H1 (cell line): ENCODE measurements at regions of chr7 and their contacts with region 1.

Region 1: DNA sequence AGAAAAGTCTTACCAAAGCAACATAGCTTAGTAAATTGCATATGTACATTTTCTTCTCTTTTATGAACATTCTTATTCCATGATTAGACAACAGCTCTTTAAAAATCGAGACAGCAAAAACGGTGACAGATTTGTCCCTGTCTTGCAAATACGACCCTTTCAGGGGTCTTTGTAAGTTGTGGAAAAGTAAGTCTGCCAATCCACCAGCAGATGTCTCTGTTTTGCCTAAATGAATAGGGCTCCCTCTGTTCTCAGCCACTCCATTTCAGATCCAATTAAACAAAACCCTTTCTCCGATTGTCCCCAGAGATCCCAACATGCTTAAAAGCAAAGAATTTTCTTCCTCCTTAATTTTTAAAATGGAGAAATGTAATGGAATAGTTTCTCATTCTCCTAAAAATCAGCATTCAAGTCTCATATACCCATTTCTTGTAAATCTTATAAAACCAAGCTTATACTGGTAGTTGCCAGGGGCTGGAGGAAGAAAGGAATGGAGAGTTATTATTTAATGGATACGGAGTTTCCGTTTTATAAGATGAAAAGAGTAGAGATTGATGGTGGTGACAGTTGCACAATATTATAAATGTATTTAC is 61.0 kb upstream of the NFE2L3 start:
- DNase-seq: no peak
- H3K4me3 ChIP-seq: peak overlapping the region in 1 of 4 experiments; percentile 19; a peak in 1 of 8 replicates
- H3K27ac ChIP-seq: no peak overlapping the region
- H3K4me1 ChIP-seq: peaks cover 0 to 3% (median 3%) of the 10 kb centered on the region in 4 experiments; a peak in 3 of 7 replicates
- H3K27me3 ChIP-seq: no peaks in the 10 kb centered on the region
- CTCF ChIP-seq: peak in 2 of 3 experiments; percentile 63 to 76; a peak in 3 of 4 replicates
- EP300 ChIP-seq: no peak
- POLR2A ChIP-seq: no peak
- RAD21 ChIP-seq: peak; percentile 84 to 87

Region 2: GRCh38 chr7:25894902-25895791 is 195.9 kb before region 1 on chr7:
- CTCF ChIA-PET with region 1: interaction called, 36 read pairs
- POLR2A ChIA-PET with region 1: no interaction called
- DNase-seq: peak in 1 of 2 experiments; percentile 87
- H3K4me3 ChIP-seq: peak overlapping the region; percentile 54 to 76 (median 62)
- H3K27ac ChIP-seq: no peak overlapping the region
- H3K4me1 ChIP-seq: peaks cover 0 to 7% (median 2%) of the 10 kb centered on the region in 4 experiments; a peak in 3 of 7 replicates
- H3K27me3 ChIP-seq: no peaks in the 10 kb centered on the region
- CTCF ChIP-seq: peak; percentile 50 to 65 (median 53)
- EP300 ChIP-seq: no peak
- POLR2A ChIP-seq: no peak
- RAD21 ChIP-seq: peak; percentile 15 to 43; a peak in 2 of 4 replicates

Region 3: DNA sequence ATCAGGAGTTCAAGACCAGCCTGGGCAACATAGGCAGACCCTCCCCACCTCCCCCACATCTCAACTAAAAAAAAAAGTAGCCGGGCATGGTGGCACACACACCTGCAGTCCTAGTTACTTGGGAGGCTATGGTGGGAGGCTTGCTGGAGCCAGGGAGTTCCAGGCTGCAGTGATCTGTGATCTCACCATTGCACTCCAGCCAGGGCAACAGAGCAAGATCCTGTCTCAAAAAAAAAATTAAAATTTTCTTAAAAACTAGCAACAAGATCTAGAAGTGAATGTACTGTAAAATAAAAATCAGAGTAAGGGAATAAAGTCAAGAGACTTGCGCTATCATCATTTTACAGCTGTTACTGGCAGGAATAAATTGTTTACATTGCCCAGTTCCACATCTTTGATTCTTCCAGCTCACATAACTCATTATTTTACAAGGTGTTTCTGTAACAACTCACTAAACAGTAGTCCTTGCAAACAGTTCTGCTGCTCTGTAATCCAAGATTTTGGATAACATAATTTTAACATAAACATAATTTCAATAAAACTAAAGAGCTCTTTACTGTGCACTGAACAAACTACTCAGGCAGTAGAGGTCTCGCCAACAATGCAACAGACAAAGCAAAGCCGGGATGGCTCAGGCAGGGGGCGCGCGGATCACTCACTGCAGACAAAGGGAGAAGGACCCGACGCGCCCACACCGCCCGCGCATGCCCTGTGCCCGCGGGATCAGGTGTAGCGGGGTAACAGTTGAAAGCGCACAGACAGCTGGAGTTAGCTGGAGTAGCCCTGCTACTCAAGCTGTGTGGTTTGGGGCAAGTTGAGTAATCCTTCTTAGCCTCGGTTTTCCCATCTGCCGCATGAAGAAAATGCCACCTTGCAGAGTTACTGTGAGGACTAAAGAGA is 12.3 kb before region 1 on chr7:
- CTCF ChIA-PET with region 1: interaction called, 79 read pairs
- POLR2A ChIA-PET with region 1: interaction called, 5 read pairs
- DNase-seq: peak; percentile 36 to 87
- H3K4me3 ChIP-seq: peak overlapping the region in 1 of 4 experiments; percentile 3; a peak in 1 of 8 replicates
- H3K27ac ChIP-seq: no peak overlapping the region
- H3K4me1 ChIP-seq: peaks cover 1 to 7% (median 3%) of the 10 kb centered on the region in 4 experiments; a peak in 3 of 7 replicates
- H3K27me3 ChIP-seq: no peaks in the 10 kb centered on the region; a peak in 2 of 7 replicates
- CTCF ChIP-seq: peak; percentile 49 to 64 (median 56)
- EP300 ChIP-seq: no peak
- POLR2A ChIP-seq: no peak
- RAD21 ChIP-seq: peak; percentile 46 to 66; a peak in 3 of 4 replicates

Region 4: GRCh38 chr7:26117142-26117807 is 26.3 kb after region 1 on chr7:
- CTCF ChIA-PET with region 1: interaction called, 21 read pairs
- POLR2A ChIA-PET with region 1: interaction called, 3 read pairs
- DNase-seq: no peak
- H3K4me3 ChIP-seq: no peak overlapping the region
- H3K27ac ChIP-seq: no peak overlapping the region
- H3K4me1 ChIP-seq: peaks cover 0 to 4% (median 3%) of the 10 kb centered on the region in 4 experiments; a peak in 4 of 7 replicates
- H3K27me3 ChIP-seq: no peaks in the 10 kb centered on the region
- CTCF ChIP-seq: peak in 1 of 3 experiments; percentile 13; a peak in 1 of 4 replicates
- EP300 ChIP-seq: no peak
- POLR2A ChIP-seq: no peak
- RAD21 ChIP-seq: peak; percentile 5 to 45; a peak in 1 of 4 replicates

Region 5: GRCh38 chr7:26151953-26152781 is 61.1 kb after region 1 on chr7 and contains the start of gene NFE2L3:
- CTCF ChIA-PET with region 1: interaction called, 12 read pairs
- POLR2A ChIA-PET with region 1: interaction called, 15 read pairs
- DNase-seq: peak in 1 of 2 experiments; percentile 87
- H3K4me3 ChIP-seq: peak within 1 kb of the TSS; percentile 65 to 99 (median 95)
- H3K27ac ChIP-seq: peak within 1 kb of the TSS; percentile 91
- H3K4me1 ChIP-seq: peaks cover 17 to 32% (median 22%) of the 10 kb centered on the region in 4 experiments
- H3K27me3 ChIP-seq: peaks cover 0 to 7% (median 0%) of the 10 kb centered on the region in 4 experiments; a peak in 2 of 7 replicates
- CTCF ChIP-seq: peak in 1 of 3 experiments; percentile 18; a peak in 1 of 4 replicates
- EP300 ChIP-seq: peak in 1 of 2 experiments; percentile 4; a peak in 1 of 3 replicates
- POLR2A ChIP-seq: peak; percentile 67 to 77
- RAD21 ChIP-seq: peak in 1 of 2 experiments; percentile 24; a peak in 1 of 4 replicates
- total RNA-seq, gene NFE2L3: 62.6 and 64.9 TPM in 2 replicates

Region 6: DNA sequence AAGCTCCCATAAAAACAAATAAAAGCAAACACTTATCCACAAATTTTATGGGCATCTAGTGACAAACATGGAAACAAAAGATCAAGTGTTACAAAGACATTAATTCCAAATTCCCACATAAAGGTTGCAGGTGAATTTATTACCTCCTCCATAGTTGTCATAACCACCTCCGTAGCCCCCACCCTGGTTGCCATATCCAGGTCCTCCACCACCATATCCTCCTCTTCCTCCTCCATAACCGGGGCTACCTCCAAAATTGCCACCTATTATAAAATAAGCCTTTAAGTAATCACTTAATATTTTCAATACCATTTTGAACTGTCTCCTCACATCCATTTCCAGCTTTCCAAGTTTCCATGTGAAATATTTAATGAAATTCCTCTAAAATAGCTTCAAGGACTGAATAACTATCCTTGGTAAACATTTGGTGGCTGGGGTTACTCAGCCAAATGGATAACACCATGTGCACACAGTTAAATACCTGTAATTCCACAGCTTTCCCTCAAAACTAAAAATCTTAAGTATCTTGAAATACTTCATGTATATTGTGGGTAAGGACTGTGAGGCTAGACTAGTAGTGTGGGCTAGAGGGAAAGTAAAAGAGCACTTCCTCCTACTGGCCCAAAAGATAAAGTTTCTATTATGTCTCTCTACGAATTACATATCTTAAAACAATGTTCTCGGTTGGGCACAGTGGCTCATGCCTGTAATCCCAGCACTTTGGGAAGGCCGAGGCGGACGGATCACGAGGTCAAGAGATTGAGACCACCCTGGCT is 102.6 kb after region 1 on chr7:
- CTCF ChIA-PET with region 1: interaction called, 30 read pairs
- POLR2A ChIA-PET with region 1: interaction called, 230 read pairs
- DNase-seq: no peak
- H3K4me3 ChIP-seq: no peak overlapping the region
- H3K27ac ChIP-seq: no peak overlapping the region
- H3K4me1 ChIP-seq: peaks cover 0 to 6% (median 0%) of the 10 kb centered on the region in 4 experiments; a peak in 3 of 7 replicates
- H3K27me3 ChIP-seq: no peaks in the 10 kb centered on the region
- CTCF ChIP-seq: no peak
- EP300 ChIP-seq: no peak
- POLR2A ChIP-seq: peak in 1 of 2 experiments; percentile 34; a peak in 2 of 3 replicates
- RAD21 ChIP-seq: no peak